ENCODE measurements at regions of chr1 and their contacts with region 1.

Region 1: GRCh38 chr1:46603858-46604549 is at the start of gene MKNK1:
- DNase-seq: peak; percentile 98
- ATAC-seq: peak; percentile 98
- H3K4me3 Mint-ChIP-seq: peak within 1 kb of the TSS; percentile 93
- H3K27ac Mint-ChIP-seq: peak within 1 kb of the TSS; percentile 82
- H3K4me1 Mint-ChIP-seq: peaks cover 73% of the 10 kb centered on the region
- H3K27me3 Mint-ChIP-seq: no peaks in the 10 kb centered on the region
- total RNA-seq, gene MKNK1: 70.6 to 78.6 TPM

Region 2: GRCh38 chr1:45843474-45843905 is 760.5 kb before region 1 on chr1:
- CTCF ChIA-PET with region 1: no interaction called
- DNase-seq: no peak
- ATAC-seq: peak; percentile 47
- H3K4me3 Mint-ChIP-seq: no peak overlapping the region
- H3K27ac Mint-ChIP-seq: peak overlapping the region; percentile 71
- H3K4me1 Mint-ChIP-seq: peaks cover 14% of the 10 kb centered on the region
- H3K27me3 Mint-ChIP-seq: no peaks in the 10 kb centered on the region

Region 3: GRCh38 chr1:46547481-46548383 is 56.3 kb before region 1 on chr1:
- CTCF ChIA-PET with region 1: interaction called, 22 read pairs
- DNase-seq: no peak
- ATAC-seq: peak; percentile 25
- H3K4me3 Mint-ChIP-seq: no peak overlapping the region
- H3K27ac Mint-ChIP-seq: peak overlapping the region; percentile 70
- H3K4me1 Mint-ChIP-seq: peaks cover 21% of the 10 kb centered on the region
- H3K27me3 Mint-ChIP-seq: peaks cover 40% of the 10 kb centered on the region

Region 4: DNA sequence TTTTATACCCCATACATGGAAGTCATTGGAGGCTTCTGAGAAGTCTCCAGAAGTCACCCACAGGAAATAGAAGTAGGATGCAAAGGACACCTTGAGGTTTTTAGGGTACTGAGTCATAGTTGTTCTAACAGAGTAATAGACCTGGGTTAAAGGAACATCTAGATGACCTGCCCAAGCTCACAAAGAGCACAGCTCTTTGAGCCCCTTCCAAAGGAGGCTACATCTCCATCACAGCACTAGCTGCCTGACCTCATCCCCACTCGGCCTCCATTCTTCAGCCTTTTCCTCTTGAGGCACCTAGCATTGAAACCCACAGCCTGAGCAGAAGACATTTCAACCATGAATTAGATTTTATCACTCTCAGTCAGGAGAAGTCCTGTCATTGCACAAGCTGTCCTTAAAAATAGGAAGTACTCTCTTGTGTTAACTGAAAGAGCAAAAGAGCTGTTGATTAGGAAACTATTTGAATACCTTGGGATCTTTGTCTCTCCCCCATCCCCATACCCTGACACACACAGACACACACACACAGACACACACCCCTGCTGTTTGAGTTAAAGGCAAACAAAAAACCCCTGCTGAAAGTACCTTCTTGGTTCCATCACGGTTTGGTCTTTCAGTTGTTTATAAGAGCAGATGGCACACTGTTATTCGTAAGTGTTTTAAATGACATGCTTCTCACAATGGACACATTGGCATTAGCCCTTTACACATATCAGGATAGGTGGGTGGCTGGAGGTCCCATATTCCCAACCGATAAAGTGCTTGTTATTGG is 22.1 kb before region 1 on chr1:
- CTCF ChIA-PET with region 1: interaction called, 38 read pairs
- DNase-seq: peak; percentile 77
- ATAC-seq: peak; percentile 93
- H3K4me3 Mint-ChIP-seq: peak overlapping the region; percentile 34
- H3K27ac Mint-ChIP-seq: peak overlapping the region; percentile 94
- H3K4me1 Mint-ChIP-seq: peaks cover 60% of the 10 kb centered on the region
- H3K27me3 Mint-ChIP-seq: no peaks in the 10 kb centered on the region

Region 5: DNA sequence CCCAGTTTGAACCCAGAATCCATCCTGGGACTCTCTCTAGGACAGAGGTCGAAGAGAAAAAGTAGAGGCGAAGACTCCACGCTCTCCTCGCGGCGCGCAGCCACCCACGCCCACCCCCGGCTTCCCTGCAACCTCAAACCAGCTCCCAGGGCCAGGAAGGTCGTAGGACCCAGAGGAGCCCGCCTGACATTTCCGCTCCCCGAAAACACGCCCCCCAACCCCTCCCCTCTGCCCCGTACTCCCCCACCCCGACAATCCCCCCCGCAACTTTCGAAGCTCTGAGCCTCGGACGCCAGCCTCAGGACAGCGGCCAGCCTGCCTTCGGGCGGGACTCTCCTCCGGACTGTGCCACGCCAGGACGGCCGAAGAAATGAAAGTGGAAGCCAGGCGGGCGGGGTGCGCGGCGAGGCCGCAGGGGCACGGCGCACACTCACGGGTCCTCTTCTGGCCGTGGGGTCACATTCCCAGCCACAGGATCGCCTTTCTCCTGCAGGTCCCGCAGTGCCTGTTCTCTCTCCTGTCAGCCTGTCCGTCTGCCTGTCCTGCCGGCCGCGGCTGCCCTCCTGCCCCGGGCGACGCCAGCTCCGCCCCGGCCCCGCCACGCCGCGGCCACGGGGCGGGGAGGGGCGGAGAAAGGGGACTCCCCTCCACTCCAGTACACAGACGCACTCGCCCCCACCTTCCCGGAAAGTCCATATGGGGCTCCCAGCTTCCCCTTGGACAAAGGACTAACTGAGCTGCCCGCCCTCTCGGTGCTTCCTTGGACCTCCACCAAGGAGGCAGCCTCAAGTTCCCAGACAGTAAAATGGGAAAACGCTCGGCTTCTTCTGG is 12.5 kb after region 1 on chr1 and contains the start of gene MOB3C:
- CTCF ChIA-PET with region 1: interaction called, 51 read pairs
- DNase-seq: peak; percentile 74
- ATAC-seq: peak; percentile 88
- H3K4me3 Mint-ChIP-seq: peak within 1 kb of the TSS; percentile 91
- H3K27ac Mint-ChIP-seq: peak within 1 kb of the TSS; percentile 84
- H3K4me1 Mint-ChIP-seq: peaks cover 57% of the 10 kb centered on the region
- H3K27me3 Mint-ChIP-seq: no peaks in the 10 kb centered on the region
- total RNA-seq, gene MOB3C: 18.3 to 20.7 TPM

Region 6: DNA sequence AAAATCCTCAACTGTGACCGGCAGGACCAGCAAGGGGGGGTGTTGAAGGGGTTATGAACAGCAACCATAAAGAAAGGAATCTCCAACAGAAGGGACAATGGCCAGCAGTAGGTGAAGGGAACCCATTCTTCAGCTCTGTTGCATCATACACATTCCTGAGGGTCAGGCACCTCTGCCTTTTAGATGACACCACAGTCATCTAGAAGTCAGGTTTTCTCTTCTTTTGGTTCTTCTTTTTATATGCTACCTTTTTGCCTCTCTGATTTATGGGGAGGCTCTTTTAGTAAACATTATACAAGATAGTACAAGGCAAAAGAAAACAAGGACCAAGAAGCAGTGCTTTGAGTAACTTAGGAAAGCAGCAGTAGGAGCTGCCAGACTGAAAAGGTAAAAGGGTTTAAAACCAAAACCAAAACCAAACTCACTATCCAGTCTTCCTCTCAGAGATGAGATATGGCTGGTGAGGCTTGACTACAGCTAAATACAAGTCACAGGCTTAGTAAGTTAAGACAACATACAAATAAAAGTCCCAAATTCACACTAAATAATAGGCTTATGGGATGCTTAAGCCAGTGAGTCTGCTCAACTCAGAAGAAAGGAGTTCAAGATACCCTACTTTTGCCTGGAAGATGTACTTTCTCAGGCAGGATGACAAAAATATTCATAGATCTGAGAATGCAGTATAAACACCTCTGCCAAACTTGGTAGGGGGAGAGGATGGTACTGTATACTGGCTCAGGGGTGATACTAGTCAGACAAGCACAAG is 71.7 kb after region 1 on chr1:
- CTCF ChIA-PET with region 1: interaction called, 12 read pairs
- DNase-seq: no peak
- ATAC-seq: peak; percentile 91
- H3K4me3 Mint-ChIP-seq: peak overlapping the region; percentile 34
- H3K27ac Mint-ChIP-seq: peak overlapping the region; percentile 94
- H3K4me1 Mint-ChIP-seq: peaks cover 39% of the 10 kb centered on the region
- H3K27me3 Mint-ChIP-seq: no peaks in the 10 kb centered on the region

Region 7: DNA sequence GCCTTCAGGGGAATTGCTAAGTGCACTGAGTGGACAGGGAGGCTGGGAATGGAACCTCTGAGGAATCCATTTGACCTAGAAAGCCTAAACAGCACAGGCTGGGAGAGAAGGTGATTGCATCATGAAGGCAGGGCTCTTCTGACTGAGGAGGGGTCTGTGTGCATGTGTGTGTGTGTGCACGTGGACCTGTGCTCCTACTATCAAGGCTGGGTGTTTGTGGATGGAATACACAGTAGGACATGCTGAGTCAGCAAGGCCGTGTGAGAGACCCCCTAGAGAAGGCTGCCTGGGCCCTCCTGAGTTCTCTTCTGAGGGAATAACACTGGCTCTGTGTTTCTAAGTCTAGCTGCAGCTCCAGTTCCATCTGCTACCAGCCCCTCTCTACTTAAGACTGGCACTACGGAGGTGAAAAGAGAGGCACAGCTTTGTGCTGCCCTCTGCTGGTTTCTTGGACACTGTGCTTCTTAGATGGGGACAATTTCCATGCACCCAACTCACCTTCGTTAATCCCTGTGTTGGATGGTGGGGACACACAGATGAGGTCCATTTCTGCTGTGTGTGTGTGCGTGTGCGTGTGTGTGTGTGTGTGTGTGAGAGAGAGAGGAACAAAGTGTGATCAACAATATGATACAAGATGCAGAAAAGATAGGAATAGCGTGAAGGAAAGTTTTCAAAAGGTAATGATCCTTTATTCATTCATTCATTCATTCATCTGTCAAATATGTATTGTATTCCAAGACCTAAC is 121.2 kb after region 1 on chr1:
- CTCF ChIA-PET with region 1: interaction called, 11 read pairs
- DNase-seq: peak; percentile 80
- ATAC-seq: peak; percentile 97
- H3K4me3 Mint-ChIP-seq: no peak overlapping the region
- H3K27ac Mint-ChIP-seq: no peak overlapping the region
- H3K4me1 Mint-ChIP-seq: no peaks in the 10 kb centered on the region
- H3K27me3 Mint-ChIP-seq: peaks cover 35% of the 10 kb centered on the region

Measured in activated CD8-positive, alpha-beta memory T cell treated with anti-CD3 and anti-CD28 coated beads, Interleukin-2, amount 10 ng/mL, durations not matched to agents 7 days and 5 days (primary cell).